K562 (cell line): ENCODE measurements at regions of chr1 and their contacts with region 1.

Region 1: GRCh38 chr1:23062271-23062670 is 43.0 kb downstream of the KDM1A start:
- DNase-seq: no peak
- ATAC-seq: no peak
- H3K4me3 ChIP-seq: no peak overlapping the region
- H3K27ac ChIP-seq: no peak overlapping the region
- H3K4me1 ChIP-seq: no peaks in the 10 kb centered on the region
- H3K27me3 ChIP-seq: no peaks in the 10 kb centered on the region
- CTCF ChIP-seq: no peak
- EP300 ChIP-seq: no peak
- POLR2A ChIP-seq: no peak
- RAD21 ChIP-seq: no peak

Region 2: DNA sequence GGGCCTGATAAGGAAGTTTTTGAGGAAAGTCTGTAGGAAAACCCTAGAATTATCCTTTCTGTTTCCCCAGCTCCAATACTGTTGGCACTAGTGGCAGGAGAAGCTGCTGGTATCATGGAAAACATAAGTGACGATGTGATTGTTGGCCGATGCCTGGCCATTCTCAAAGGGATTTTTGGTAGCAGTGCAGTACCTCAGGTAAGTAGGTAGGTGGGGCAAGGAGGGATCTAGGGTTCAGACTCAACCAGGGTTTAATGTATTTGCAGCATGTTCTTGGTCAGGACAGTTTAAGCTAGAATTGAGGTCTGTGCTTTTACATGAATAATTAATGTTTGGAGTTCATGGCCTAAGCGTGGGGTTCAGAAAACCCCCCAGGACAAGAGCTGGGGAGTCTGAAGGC is 19.1 kb after region 1 on chr1:
- CTCF ChIA-PET with region 1: no interaction called
- POLR2A ChIA-PET with region 1: interaction called, 10 read pairs
- in situ Hi-C with region 1: no loop called
- intact Hi-C with region 1: no loop called
- DNase-seq: no peak
- ATAC-seq: peak; percentile 64
- H3K4me3 ChIP-seq: no peak overlapping the region
- H3K27ac ChIP-seq: no peak overlapping the region
- H3K4me1 ChIP-seq: no peaks in the 10 kb centered on the region
- H3K27me3 ChIP-seq: no peaks in the 10 kb centered on the region
- CTCF ChIP-seq: peak; percentile 33 to 44 (median 36); a peak in 4 of 6 replicates
- EP300 ChIP-seq: no peak
- POLR2A ChIP-seq: no peak; the same call in 1 of the 2 replicates
- RAD21 ChIP-seq: 0 out of 4 replicates have a peak, but pooled peaks of 1 of the 2 experiments have one; percentile 28